Naive thymus-derived CD4-positive, alpha-beta T cell (primary cell): ENCODE measurements at regions of chr5 and their contacts with region 1.

Region 1: DNA sequence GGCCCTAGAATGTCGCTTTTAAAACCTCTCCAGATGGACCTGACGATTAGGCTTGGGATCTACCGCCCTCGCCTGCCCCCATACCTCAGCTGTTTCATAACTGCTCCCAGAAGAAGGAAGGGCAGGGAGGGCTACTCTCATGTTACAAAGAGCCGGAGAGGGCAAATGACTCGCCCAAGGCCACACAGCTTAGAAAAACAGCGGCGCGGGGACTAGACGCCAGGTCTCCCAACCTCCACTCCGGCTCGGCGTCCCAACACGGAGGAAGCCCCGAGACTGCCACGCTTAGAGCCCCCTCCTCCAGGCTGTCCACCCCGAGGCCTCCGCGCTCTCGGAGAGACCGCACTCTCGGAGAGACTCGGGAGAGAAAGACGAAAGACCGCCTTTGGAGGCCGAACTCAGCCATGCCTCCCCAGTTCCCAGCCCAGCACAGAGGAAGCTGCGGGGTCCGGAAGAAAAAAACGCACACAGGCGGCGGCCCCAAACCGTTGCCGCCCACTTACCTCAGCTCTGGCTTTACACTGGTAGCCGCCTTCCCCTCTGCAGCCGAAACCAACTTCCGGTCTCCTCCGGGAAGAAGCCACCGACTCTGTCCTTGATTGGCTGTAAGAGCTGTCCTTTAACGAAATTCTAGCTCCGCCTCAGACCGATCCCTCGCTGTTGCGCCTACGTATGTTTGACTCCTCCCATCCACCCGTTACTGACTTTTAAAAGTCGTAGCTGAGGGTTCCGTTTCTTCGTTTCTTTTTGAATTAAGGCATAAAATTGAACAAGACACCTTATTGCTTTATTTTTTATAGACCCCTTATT is at the start of gene MED7:
- DNase-seq: peak; percentile 66 to 98 (median 96)
- ATAC-seq: peak; percentile 98
- H3K4me3 ChIP-seq: peak within 1 kb of the TSS; percentile 82
- H3K4me3 Mint-ChIP-seq: peak within 1 kb of the TSS; percentile 92 to 99 (median 96)
- H3K27ac ChIP-seq: peak within 1 kb of the TSS; percentile 94
- H3K27ac Mint-ChIP-seq: peak within 1 kb of the TSS; percentile 97 to 100 (median 99)
- H3K4me1 ChIP-seq: peaks cover 11 to 22% of the 10 kb centered on the region in 2 donors
- H3K4me1 Mint-ChIP-seq: peaks cover 11 to 64% (median 48%) of the 10 kb centered on the region in 7 donors
- H3K27me3 ChIP-seq: no peaks in the 10 kb centered on the region
- H3K27me3 Mint-ChIP-seq: no peaks in the 10 kb centered on the region
- total RNA-seq, gene MED7: 5.8 to 18.5 (median 14.2) TPM

Region 2: GRCh38 chr5:156920042-156920860 is 222.3 kb before region 1 on chr5:
- CTCF ChIA-PET with region 1: no interaction called
- POLR2A ChIA-PET with region 1: interaction called, 13 read pairs
- intact Hi-C with region 1: loop called in 1 of 2 experiments (anchors 2 kb)
- DNase-seq: peak in 1 of 9 donors; percentile 76
- ATAC-seq: peak; percentile 46
- H3K4me3 ChIP-seq: no peak overlapping the region
- H3K4me3 Mint-ChIP-seq: peak overlapping the region in 1 of 10 donors; percentile 79
- H3K27ac ChIP-seq: no peak overlapping the region
- H3K27ac Mint-ChIP-seq: peak overlapping the region in 7 of 9 donors; percentile 18 to 94 (median 52)
- H3K4me1 ChIP-seq: peaks cover 9 to 10% of the 10 kb centered on the region in 2 donors
- H3K4me1 Mint-ChIP-seq: peaks cover 12 to 78% (median 67%) of the 10 kb centered on the region in 7 donors
- H3K27me3 ChIP-seq: no peaks in the 10 kb centered on the region
- H3K27me3 Mint-ChIP-seq: no peaks in the 10 kb centered on the region

Region 3: DNA sequence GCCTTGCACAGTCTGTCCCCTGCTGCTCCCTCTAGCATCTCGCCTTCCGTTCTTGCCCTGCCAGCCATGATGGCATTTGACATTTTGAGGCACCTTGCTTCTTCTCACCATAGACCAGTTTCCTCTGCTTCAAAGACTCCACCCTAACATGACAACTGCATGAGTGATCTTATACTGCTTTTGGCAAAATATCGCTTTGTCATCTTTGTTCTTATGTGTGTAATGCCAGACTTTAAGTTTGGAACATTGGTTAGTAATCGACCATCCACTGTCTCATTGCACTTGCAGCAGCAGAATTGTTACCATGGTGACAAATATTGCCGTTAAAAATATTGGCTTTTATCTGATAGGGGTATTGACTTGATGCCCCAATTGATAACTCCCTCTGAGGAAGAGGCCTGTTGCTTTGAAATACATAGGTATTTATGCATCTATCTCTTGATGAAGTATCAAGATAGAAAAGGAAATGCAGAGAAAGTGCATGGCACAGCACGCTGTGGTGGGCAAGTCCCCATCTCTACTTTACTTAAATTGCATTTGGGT is 16.8 kb after region 1 on chr5:
- CTCF ChIA-PET with region 1: interaction called, 4 read pairs
- POLR2A ChIA-PET with region 1: interaction called, 34 read pairs
- intact Hi-C with region 1: no loop called
- DNase-seq: peak in 7 of 9 donors; percentile 31 to 76 (median 58)
- ATAC-seq: peak; percentile 84
- H3K4me3 ChIP-seq: peak overlapping the region; percentile 7
- H3K4me3 Mint-ChIP-seq: peak overlapping the region in 9 of 10 donors; percentile 42 to 76 (median 55)
- H3K27ac ChIP-seq: peak overlapping the region; percentile 67
- H3K27ac Mint-ChIP-seq: peak overlapping the region; percentile 68 to 84 (median 79)
- H3K4me1 ChIP-seq: peaks cover 43 to 44% of the 10 kb centered on the region in 2 donors
- H3K4me1 Mint-ChIP-seq: peaks cover 34 to 78% (median 70%) of the 10 kb centered on the region in 7 donors
- H3K27me3 ChIP-seq: no peaks in the 10 kb centered on the region
- H3K27me3 Mint-ChIP-seq: no peaks in the 10 kb centered on the region

Region 4: GRCh38 chr5:157198277-157198986 is 55.9 kb after region 1 on chr5:
- CTCF ChIA-PET with region 1: interaction called, 3 read pairs
- POLR2A ChIA-PET with region 1: interaction called, 20 read pairs
- intact Hi-C with region 1: loop called in 1 of 2 experiments (anchors 5 kb)
- DNase-seq: peak in 2 of 9 donors; percentile 58 to 77
- ATAC-seq: peak; percentile 49
- H3K4me3 ChIP-seq: peak overlapping the region; percentile 24
- H3K4me3 Mint-ChIP-seq: peak overlapping the region; percentile 47 to 98 (median 78)
- H3K27ac ChIP-seq: peak overlapping the region; percentile 81
- H3K27ac Mint-ChIP-seq: peak overlapping the region; percentile 78 to 98 (median 87)
- H3K4me1 ChIP-seq: peaks cover 86 to 95% of the 10 kb centered on the region in 2 donors
- H3K4me1 Mint-ChIP-seq: peaks cover 53 to 100% (median 97%) of the 10 kb centered on the region in 7 donors
- H3K27me3 ChIP-seq: no peaks in the 10 kb centered on the region
- H3K27me3 Mint-ChIP-seq: no peaks in the 10 kb centered on the region

Region 5: DNA sequence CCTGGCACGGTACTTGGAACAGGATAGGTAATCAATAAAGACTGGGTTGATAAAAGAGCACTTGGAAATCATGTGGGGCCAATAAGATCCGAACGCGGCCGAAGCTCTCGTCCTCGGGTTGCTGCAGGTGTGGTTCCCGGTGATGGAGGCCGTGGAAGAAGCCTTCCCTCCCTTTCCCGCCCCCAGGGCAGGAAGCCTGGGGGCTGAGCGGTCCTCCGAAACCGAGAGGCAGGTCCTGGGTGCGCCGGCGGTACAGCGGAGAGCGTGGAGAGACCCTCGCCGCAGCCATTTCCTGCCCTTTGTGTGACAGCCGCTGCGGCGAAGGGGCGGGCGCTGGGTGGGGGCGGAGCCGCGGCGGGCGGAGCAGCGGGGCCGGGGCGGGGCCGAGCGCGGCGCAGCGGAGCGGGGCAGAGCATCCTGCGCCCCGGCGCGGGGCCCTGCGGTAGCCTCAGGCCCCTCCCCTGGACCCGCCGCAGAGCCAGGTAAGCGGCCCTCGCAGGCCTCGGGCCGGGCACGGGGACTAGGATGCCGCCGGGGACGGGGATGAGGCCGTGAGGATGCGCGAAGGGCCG is 123.3 kb after region 1 on chr5 and contains the start of gene CYFIP2:
- CTCF ChIA-PET with region 1: interaction called, 4 read pairs
- POLR2A ChIA-PET with region 1: interaction called, 11 read pairs
- intact Hi-C with region 1: loop called in 1 of 2 experiments (anchors 1 kb)
- DNase-seq: peak; percentile 68 to 85 (median 84)
- ATAC-seq: peak; percentile 94
- H3K4me3 ChIP-seq: peak within 1 kb of the TSS; percentile 83
- H3K4me3 Mint-ChIP-seq: peak within 1 kb of the TSS; percentile 95 to 99 (median 97)
- H3K27ac ChIP-seq: peak within 1 kb of the TSS; percentile 84
- H3K27ac Mint-ChIP-seq: peak within 1 kb of the TSS; percentile 95 to 99 (median 98)
- H3K4me1 ChIP-seq: peaks cover 41 to 57% of the 10 kb centered on the region in 2 donors
- H3K4me1 Mint-ChIP-seq: peaks cover 51 to 76% (median 72%) of the 10 kb centered on the region in 7 donors
- H3K27me3 ChIP-seq: no peaks in the 10 kb centered on the region
- H3K27me3 Mint-ChIP-seq: no peaks in the 10 kb centered on the region
- total RNA-seq, gene CYFIP2: 386 to 449 (median 401) TPM

Region 6: GRCh38 chr5:157328277-157328912 is 185.9 kb after region 1 on chr5:
- CTCF ChIA-PET with region 1: interaction called, 6 read pairs
- POLR2A ChIA-PET with region 1: interaction called, 7 read pairs
- intact Hi-C with region 1: loop called in 1 of 2 experiments (anchors 1 kb)
- DNase-seq: peak in 8 of 9 donors; percentile 42 to 67 (median 60)
- ATAC-seq: peak; percentile 93
- H3K4me3 ChIP-seq: no peak overlapping the region
- H3K4me3 Mint-ChIP-seq: peak overlapping the region; percentile 29 to 80 (median 68)
- H3K27ac ChIP-seq: peak overlapping the region; percentile 63
- H3K27ac Mint-ChIP-seq: peak overlapping the region; percentile 71 to 95 (median 91)
- H3K4me1 ChIP-seq: peaks cover 10 to 24% of the 10 kb centered on the region in 2 donors
- H3K4me1 Mint-ChIP-seq: peaks cover 28 to 50% (median 45%) of the 10 kb centered on the region in 7 donors
- H3K27me3 ChIP-seq: no peaks in the 10 kb centered on the region
- H3K27me3 Mint-ChIP-seq: no peaks in the 10 kb centered on the region

Region 7: GRCh38 chr5:157858527-157859226 is 716.2 kb after region 1 on chr5 and contains the start of gene CLINT1:
- CTCF ChIA-PET with region 1: no interaction called
- POLR2A ChIA-PET with region 1: no interaction called
- intact Hi-C with region 1: loop called (anchors 1 to 2 kb)
- DNase-seq: peak; percentile 78 to 86 (median 84)
- ATAC-seq: peak; percentile 96
- H3K4me3 ChIP-seq: peak within 1 kb of the TSS; percentile 96
- H3K4me3 Mint-ChIP-seq: peak within 1 kb of the TSS; percentile 88 to 99 (median 96)
- H3K27ac ChIP-seq: peak within 1 kb of the TSS; percentile 85
- H3K27ac Mint-ChIP-seq: peak within 1 kb of the TSS; percentile 94 to 99 (median 96)
- H3K4me1 ChIP-seq: peaks cover 7 to 13% of the 10 kb centered on the region in 2 donors
- H3K4me1 Mint-ChIP-seq: peaks cover 51 to 83% (median 78%) of the 10 kb centered on the region in 7 donors
- H3K27me3 ChIP-seq: no peaks in the 10 kb centered on the region
- H3K27me3 Mint-ChIP-seq: no peaks in the 10 kb centered on the region
- total RNA-seq, gene CLINT1: 58.8 to 94.2 (median 74.0) TPM

Region 8: GRCh38 chr5:158246661-158247060 is 1104.1 kb after region 1 on chr5:
- CTCF ChIA-PET with region 1: no interaction called
- POLR2A ChIA-PET with region 1: no interaction called
- intact Hi-C with region 1: no loop called
- DNase-seq: no peak
- ATAC-seq: no peak
- H3K4me3 ChIP-seq: no peak overlapping the region
- H3K4me3 Mint-ChIP-seq: no peak overlapping the region
- H3K27ac ChIP-seq: no peak overlapping the region
- H3K27ac Mint-ChIP-seq: no peak overlapping the region
- H3K4me1 ChIP-seq: no peaks in the 10 kb centered on the region
- H3K4me1 Mint-ChIP-seq: peaks cover 0 to 3% (median 0%) of the 10 kb centered on the region in 7 donors
- H3K27me3 ChIP-seq: no peaks in the 10 kb centered on the region
- H3K27me3 Mint-ChIP-seq: peaks cover 0 to 16% (median 3%) of the 10 kb centered on the region in 5 donors